Gastrocnemius medialis (tissue), 4 donors: ENCODE measurements at regions of chr14 and their contacts with region 1.

Region 1: DNA sequence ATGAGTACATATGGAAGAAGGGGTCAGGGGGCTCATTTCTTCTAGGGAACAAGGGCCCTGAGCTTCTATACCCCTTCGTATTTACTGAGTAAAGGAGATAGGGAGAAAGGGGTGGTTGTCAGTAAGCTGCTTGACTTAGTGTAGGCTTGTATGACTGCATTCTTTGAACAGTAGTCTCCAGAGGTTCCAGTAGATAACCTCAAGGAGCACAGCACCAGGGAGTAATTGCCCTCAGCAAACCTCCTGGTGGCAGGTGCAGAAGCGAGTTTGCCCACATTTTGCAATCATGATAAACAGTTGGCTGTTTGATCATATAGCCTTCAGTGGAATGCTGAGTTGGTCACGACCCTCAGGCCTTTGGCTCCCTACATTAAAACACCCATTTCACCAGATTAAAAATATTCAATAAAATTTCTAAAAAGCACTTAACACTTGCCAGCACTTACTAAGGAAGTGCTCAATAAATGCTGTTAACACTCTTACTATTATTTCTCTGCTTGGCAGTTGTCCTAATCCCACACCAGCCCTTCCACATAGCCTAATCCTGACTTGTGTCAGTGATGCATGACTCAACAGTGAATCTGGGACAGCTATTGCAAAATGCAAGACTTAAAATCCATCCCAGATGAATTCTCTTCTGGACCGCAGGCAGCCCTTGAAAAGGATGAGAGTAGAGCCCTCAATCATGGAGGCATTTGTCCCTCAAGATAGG is 3.7 kb upstream of the DHRS4L2 start:
- DNase-seq: peak; percentile 34 to 48
- ATAC-seq: peak; percentile 44 to 69
- H3K4me3 ChIP-seq: no peak overlapping the region
- H3K27ac ChIP-seq: peak overlapping the region; percentile 50 to 72 (median 68)
- H3K4me1 ChIP-seq: peaks cover 17 to 21% of the 10 kb centered on the region in 2 donors
- H3K27me3 ChIP-seq: no peaks in the 10 kb centered on the region
- CTCF ChIP-seq: no peak
- POLR2A ChIP-seq: no peak

Region 2: GRCh38 chr14:24036169-24036962 is 51.3 kb after region 1 on chr14:
- in situ Hi-C with region 1: loop called in 2 of 4 experiments (anchors 10 kb)
- intact Hi-C with region 1: loop called (anchors 2 kb)
- DNase-seq: peak; percentile 76 to 82
- ATAC-seq: peak; percentile 76 to 80
- H3K4me3 ChIP-seq: peak overlapping the region; percentile 50 to 93 (median 64)
- H3K27ac ChIP-seq: peak overlapping the region; percentile 81 to 96 (median 94)
- H3K4me1 ChIP-seq: peaks cover 11 to 25% of the 10 kb centered on the region in 2 donors
- H3K27me3 ChIP-seq: no peaks in the 10 kb centered on the region
- CTCF ChIP-seq: peak; percentile 73 to 86 (median 79)
- POLR2A ChIP-seq: peak; percentile 43 to 68